Activated naive CD4-positive, alpha-beta T cell treated with anti-CD3 and anti-CD28 coated beads for 36 hours (primary cell): ENCODE measurements at regions of chr13 and their contacts with region 1.

Region 1: GRCh38 chr13:112942689-112943308 is 26.2 kb upstream of the MCF2L start:
- DNase-seq: peak; percentile 99
- H3K4me3 Mint-ChIP-seq: peak overlapping the region; percentile 81
- H3K27ac Mint-ChIP-seq: no peak overlapping the region
- H3K4me1 Mint-ChIP-seq: peaks cover 7% of the 10 kb centered on the region
- H3K27me3 Mint-ChIP-seq: peaks cover 5% of the 10 kb centered on the region

Region 2: DNA sequence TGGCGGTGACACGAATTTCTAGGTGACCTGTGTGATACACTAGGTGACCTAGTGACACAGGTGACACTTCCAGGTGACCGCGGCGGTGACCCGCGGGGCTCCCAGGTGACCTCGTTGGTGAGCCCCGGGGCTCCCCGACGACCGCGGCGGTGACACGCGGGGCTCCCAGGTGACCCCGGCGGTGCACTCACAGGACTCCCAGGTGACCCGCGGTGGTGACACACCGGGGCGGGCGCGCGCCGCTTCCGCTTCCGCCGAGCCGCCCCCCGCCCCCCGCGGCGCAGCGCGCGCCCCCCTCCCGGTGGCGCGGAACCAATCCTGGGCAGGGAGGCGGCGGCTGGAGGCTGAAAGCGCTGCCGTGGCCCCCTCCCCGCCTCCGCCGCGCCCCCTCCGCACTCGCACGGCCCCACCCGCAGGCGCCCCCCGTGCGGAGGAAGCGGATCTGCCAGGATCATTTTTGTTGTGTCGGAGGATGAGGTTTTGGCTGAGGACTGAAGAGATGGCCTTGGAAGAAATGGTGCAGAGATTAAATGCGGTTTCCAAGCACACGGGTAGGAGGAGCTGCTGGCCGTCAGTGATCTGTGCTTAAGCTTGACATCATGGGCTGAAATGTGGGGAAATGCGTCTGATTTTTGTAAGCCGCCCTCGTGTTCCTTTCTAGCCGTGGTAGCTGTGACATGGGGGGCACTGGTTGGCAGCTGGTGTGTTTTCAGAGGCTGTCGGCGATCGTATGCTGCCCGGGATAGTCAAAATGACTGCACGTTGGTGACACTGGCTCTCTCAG is 26.3 kb after region 1 on chr13 and contains the start of gene MCF2L:
- CTCF ChIA-PET with region 1: interaction called, 4 read pairs
- intact Hi-C with region 1: loop called (anchors 1 kb)
- DNase-seq: peak; percentile 76
- H3K4me3 Mint-ChIP-seq: peak within 1 kb of the TSS; percentile 91
- H3K27ac Mint-ChIP-seq: peak within 1 kb of the TSS; percentile 74
- H3K4me1 Mint-ChIP-seq: peaks cover 25% of the 10 kb centered on the region
- H3K27me3 Mint-ChIP-seq: no peaks in the 10 kb centered on the region
- total RNA-seq, gene MCF2L: 6.5 to 7.4 TPM

Region 3: DNA sequence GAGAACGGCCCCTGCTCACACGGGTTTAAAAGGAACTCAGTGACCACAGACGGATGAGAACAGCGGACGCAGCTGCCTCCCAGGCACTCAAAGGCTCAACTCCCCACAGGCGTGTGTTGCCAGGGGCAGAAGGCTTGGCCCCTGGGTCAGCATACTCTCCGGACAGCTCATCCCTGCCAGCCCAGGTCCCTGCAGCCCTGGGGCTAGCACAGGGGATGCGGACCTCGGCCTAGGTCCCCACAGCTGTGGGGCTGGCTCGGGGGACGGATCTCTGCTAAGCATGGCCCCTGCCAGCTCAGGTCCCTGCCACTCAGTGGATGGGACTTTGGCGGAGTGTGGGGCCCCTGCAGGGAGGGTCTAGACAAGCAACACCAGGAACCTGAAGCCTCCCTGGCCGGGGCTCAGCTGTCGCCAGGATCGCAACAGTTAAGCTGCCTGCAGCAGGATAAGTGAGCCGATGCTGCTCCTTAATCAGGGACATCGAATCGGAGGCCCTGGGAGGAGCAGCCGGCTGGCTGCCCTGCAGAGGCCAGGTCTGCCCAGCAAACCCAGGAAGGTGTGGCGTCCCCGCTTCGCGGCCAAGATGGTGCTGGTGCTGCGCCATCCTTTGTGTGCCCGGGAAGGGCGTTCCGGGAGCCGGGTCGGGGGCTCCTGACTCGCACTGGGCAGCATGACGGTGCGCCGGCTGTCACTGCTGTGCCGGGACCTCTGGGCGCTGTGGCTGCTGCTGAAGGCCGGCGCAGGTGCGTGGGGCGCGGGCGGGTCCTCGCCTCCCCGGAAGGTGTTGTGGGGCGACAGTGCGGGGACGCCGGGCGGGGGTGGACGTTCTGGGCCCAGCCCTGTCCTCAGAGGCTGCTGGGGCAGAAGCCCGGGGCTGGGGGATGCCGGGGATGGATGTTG is 58.7 kb after region 1 on chr13:
- CTCF ChIA-PET with region 1: no interaction called
- intact Hi-C with region 1: loop called (anchors 2 kb)
- DNase-seq: no peak
- H3K4me3 Mint-ChIP-seq: no peak overlapping the region
- H3K27ac Mint-ChIP-seq: no peak overlapping the region
- H3K4me1 Mint-ChIP-seq: peaks cover 30% of the 10 kb centered on the region
- H3K27me3 Mint-ChIP-seq: no peaks in the 10 kb centered on the region

Region 4: DNA sequence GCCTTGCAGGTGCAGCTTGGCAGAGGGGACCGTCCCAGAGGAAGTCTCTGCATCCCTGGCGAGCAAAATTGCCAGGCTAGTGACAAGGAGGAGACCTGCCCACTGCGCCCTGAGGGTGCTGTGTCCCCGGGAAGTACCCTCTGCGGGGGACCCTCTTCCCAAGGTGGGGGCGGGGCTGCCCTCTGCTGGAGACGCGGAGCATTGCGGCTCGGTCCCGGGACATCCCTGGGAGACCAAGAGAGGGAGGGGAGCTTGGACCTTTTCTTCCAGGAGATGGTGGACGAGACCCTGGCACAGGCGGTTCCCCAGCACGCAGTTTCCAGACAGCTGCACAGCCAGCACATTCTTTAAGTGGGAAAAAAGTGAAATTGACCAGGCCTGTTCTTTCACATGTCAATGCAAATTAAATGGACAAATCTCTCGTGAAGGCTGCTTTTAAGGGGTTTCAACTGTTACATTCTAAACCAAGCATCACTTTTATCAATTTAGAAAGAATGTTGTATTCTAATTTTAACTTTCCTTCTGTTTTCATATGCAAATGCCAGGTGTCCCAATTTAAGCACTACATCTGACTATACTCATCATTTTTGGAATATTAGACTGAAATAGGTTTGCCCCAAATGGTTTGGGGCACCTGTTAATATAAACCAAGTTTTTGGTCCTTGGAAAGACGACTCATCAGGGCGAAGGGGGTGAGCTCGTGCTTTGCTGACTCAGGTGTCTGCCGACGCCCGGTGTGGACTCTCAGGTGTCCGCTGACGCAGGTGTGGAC is 86.9 kb after region 1 on chr13:
- CTCF ChIA-PET with region 1: interaction called, 61 read pairs
- intact Hi-C with region 1: loop called (anchors 1 kb)
- DNase-seq: peak; percentile 65
- H3K4me3 Mint-ChIP-seq: no peak overlapping the region
- H3K27ac Mint-ChIP-seq: no peak overlapping the region
- H3K4me1 Mint-ChIP-seq: no peaks in the 10 kb centered on the region
- H3K27me3 Mint-ChIP-seq: no peaks in the 10 kb centered on the region

Region 5: GRCh38 chr13:113049521-113049941 is 106.7 kb after region 1 on chr13:
- CTCF ChIA-PET with region 1: no interaction called
- intact Hi-C with region 1: no loop called
- DNase-seq: no peak
- H3K4me3 Mint-ChIP-seq: no peak overlapping the region
- H3K27ac Mint-ChIP-seq: no peak overlapping the region
- H3K4me1 Mint-ChIP-seq: no peaks in the 10 kb centered on the region
- H3K27me3 Mint-ChIP-seq: no peaks in the 10 kb centered on the region

Region 6: GRCh38 chr13:113296842-113297369 is 354.1 kb after region 1 on chr13 and contains the start of gene LAMP1:
- CTCF ChIA-PET with region 1: no interaction called
- intact Hi-C with region 1: loop called (anchors 5 kb)
- DNase-seq: peak; percentile 97
- H3K4me3 Mint-ChIP-seq: peak within 1 kb of the TSS; percentile 91
- H3K27ac Mint-ChIP-seq: peak within 1 kb of the TSS; percentile 96
- H3K4me1 Mint-ChIP-seq: peaks cover 32% of the 10 kb centered on the region
- H3K27me3 Mint-ChIP-seq: peaks cover 10% of the 10 kb centered on the region
- total RNA-seq, gene LAMP1: 33.5 to 33.7 TPM

Region 7: DNA sequence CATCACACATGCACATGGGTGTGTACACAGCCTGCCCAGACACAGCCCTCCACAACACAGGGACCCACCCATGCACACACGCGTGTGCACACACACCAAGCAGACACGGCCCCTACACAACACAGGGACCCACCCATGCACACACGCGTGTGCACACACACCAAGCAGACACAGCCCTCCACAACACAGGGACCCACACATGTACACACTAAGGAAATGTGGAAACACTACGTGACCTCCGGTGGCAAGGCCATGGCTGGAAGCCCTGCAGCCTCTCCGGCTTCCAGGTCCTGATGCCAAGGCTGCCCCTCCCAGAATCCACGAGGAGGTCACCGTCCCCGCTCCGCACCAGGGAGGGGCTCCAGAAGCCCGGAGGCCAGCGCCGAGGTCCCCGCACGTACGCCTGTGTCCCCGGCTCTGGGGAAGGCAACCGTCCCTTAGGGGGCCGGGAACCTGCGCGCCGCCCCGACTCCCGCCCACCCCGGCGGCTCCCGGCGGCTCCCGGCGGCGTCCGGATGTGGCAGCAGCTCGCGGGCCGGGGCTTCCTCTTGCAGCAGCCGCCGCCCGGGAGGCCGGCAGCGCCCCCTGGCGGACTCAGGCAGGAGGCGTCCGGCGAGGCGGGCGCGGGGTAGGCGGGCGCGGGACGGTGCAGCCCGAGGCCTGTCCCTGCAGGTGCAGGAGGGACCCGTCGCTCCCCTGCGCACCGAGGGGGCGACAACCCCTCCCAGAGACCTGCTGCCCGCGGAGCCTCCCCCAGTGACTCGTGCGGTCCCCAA is 451.0 kb after region 1 on chr13:
- CTCF ChIA-PET with region 1: interaction called, 12 read pairs
- intact Hi-C with region 1: loop called (anchors 1 kb)
- DNase-seq: peak; percentile 86
- H3K4me3 Mint-ChIP-seq: peak overlapping the region; percentile 85
- H3K27ac Mint-ChIP-seq: peak overlapping the region; percentile 46
- H3K4me1 Mint-ChIP-seq: peaks cover 4% of the 10 kb centered on the region
- H3K27me3 Mint-ChIP-seq: no peaks in the 10 kb centered on the region

Region 8: DNA sequence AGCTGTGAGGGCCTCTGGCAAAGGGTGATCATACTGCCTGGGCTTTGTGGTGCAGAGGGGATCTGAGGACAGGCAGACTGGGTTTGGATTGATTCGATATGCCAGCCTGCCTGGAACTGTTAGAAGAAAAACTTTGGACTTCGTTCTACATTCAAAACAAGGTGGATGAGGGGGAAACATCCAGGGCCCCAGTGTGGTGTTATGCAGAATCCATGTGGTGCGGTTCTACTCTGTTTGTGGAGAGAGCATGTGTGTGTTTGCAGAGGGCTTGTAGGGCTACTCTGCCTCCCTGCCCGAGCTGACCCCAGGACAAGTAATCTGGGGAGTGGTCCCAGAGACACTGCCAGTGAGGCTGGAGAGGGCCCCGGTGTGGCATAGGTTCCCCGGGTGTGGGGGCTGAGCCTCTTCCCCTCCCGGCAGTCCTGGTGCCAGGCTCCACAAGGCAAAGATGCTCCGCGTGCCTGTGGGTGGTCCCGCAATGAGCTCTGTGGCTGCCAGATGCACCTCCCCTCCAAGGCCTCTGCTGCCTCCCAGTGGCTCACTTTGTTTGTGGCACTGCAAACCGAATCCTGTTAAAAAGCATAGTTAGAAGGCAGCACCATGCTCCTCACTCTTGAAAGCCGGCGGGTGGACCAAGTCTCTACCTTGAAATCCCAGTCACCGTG is 619.4 kb after region 1 on chr13:
- CTCF ChIA-PET with region 1: no interaction called
- intact Hi-C with region 1: loop called (anchors 2 kb)
- DNase-seq: peak; percentile 70
- H3K4me3 Mint-ChIP-seq: no peak overlapping the region
- H3K27ac Mint-ChIP-seq: no peak overlapping the region
- H3K4me1 Mint-ChIP-seq: peaks cover 4% of the 10 kb centered on the region
- H3K27me3 Mint-ChIP-seq: peaks cover 2% of the 10 kb centered on the region

Region 9: GRCh38 chr13:113771709-113772331 is 829.0 kb after region 1 on chr13:
- CTCF ChIA-PET with region 1: no interaction called
- intact Hi-C with region 1: no loop called
- DNase-seq: no peak
- H3K4me3 Mint-ChIP-seq: no peak overlapping the region
- H3K27ac Mint-ChIP-seq: no peak overlapping the region
- H3K4me1 Mint-ChIP-seq: peaks cover 11% of the 10 kb centered on the region
- H3K27me3 Mint-ChIP-seq: no peaks in the 10 kb centered on the region